GM12878 (cell line): ENCODE measurements at regions of chr9 and their contacts with region 1.

Region 1: GRCh38 chr9:29806937-29807618 is 2233.8 kb upstream of the C9orf72 start:
- DNase-seq: no peak
- ATAC-seq: peak; percentile 35; the same call in 2 of the 3 replicates
- H3K4me3 ChIP-seq: no peak overlapping the region
- H3K27ac ChIP-seq: no peak overlapping the region
- H3K4me1 ChIP-seq: no peaks in the 10 kb centered on the region
- H3K27me3 ChIP-seq: no peaks in the 10 kb centered on the region
- CTCF ChIP-seq: no peak
- EP300 ChIP-seq: no peak
- POLR2A ChIP-seq: no peak
- RAD21 ChIP-seq: no peak

Region 2: GRCh38 chr9:29740518-29740917 is 66.6 kb before region 1 on chr9:
- CTCF ChIA-PET with region 1: no interaction called
- POLR2A ChIA-PET with region 1: no interaction called
- RAD21 ChIA-PET with region 1: no interaction called
- SMC1A ChIA-PET with region 1: no interaction called
- in situ Hi-C with region 1: loop called (anchors 10 kb)
- intact Hi-C with region 1: no loop called
- DNase-seq: no peak
- ATAC-seq: no peak
- H3K4me3 ChIP-seq: no peak overlapping the region
- H3K27ac ChIP-seq: no peak overlapping the region
- H3K4me1 ChIP-seq: no peaks in the 10 kb centered on the region
- H3K27me3 ChIP-seq: no peaks in the 10 kb centered on the region
- CTCF ChIP-seq: no peak
- EP300 ChIP-seq: no peak
- POLR2A ChIP-seq: no peak
- RAD21 ChIP-seq: no peak

Region 3: DNA sequence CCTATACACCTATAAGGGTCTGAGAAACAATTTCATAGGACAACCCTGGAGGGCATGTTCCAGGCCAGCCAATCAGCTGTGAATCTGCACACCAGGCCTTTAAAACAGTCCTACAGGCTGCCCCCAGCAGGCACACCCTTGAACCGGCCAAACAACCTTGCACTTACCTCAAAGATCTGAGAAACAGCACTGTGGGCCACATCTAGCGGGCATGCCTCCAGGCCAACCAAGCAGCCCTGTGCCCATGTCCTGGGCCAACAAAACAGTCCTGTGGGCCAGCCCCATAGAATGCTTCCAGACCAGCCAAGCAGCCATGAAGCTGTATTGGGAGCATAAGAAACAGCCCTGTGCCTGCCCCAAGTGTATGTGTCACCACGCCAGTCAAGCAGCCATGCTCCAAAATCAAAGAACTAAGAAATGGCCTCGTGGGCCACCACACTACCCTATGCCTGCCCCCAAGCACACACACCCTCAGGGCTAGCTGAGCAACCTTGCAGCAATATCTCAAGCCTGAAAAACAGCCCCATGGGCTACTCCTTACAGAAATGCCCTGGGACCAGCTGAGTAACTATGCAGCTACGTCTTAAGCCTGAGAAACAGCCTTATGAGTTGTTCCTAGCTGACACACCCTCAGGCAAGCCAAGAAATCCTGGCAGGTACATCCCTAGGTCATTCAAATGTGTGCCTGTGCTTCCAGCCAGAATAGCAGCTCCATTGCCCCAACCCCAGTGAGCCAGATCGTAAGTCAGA is 10.1 kb after region 1 on chr9:
- CTCF ChIA-PET with region 1: no interaction called
- POLR2A ChIA-PET with region 1: no interaction called
- RAD21 ChIA-PET with region 1: no interaction called
- SMC1A ChIA-PET with region 1: no interaction called
- in situ Hi-C with region 1: no loop called
- intact Hi-C with region 1: no loop called
- DNase-seq: no peak
- ATAC-seq: no peak
- H3K4me3 ChIP-seq: no peak overlapping the region
- H3K27ac ChIP-seq: no peak overlapping the region
- H3K4me1 ChIP-seq: no peaks in the 10 kb centered on the region
- H3K27me3 ChIP-seq: no peaks in the 10 kb centered on the region
- CTCF ChIP-seq: no peak
- EP300 ChIP-seq: no peak
- POLR2A ChIP-seq: no peak
- RAD21 ChIP-seq: no peak